GM12878 (cell line): ENCODE measurements at regions of chr22 and their contacts with region 1.

Region 1: GRCh38 chr22:42945736-42946135 is 69.2 kb downstream of the PACSIN2 start:
- DNase-seq: no peak
- ATAC-seq: peak; percentile 61
- H3K4me3 ChIP-seq: no peak overlapping the region
- H3K27ac ChIP-seq: peak overlapping the region; percentile 53; the same call in 1 of the 2 replicates
- H3K4me1 ChIP-seq: peaks cover 31% of the 10 kb centered on the region
- H3K27me3 ChIP-seq: no peaks in the 10 kb centered on the region
- CTCF ChIP-seq: no peak
- EP300 ChIP-seq: no peak
- POLR2A ChIP-seq: no peak
- RAD21 ChIP-seq: no peak

Region 2: DNA sequence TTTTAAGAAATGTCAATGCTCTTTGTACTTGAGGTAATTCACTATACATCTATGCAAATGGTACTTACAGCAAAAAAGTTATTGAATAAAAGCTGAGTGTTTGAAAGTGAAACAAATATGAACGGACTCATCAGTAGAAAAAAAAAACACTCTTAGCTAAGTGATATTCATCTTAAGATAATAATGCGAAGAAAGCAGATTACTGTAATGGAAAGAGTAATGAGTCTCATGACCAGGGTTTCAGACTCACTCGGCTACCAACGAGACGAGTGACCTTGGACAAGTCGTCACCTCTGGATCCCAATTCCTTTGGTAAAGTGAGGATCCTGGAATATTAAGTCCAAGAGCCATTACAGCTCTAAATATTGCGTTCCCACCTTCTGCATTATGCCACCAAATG is 12.2 kb after region 1 on chr22:
- CTCF ChIA-PET with region 1: interaction called, 4 read pairs
- POLR2A ChIA-PET with region 1: interaction called, 4 read pairs
- RAD21 ChIA-PET with region 1: interaction called, 7 read pairs
- SMC1A ChIA-PET with region 1: interaction called, 10 read pairs
- in situ Hi-C with region 1: no loop called
- intact Hi-C with region 1: no loop called
- DNase-seq: no peak
- ATAC-seq: peak; percentile 54
- H3K4me3 ChIP-seq: no peak overlapping the region
- H3K27ac ChIP-seq: peak overlapping the region; percentile 27; the same call in 1 of the 2 replicates
- H3K4me1 ChIP-seq: peaks cover 11% of the 10 kb centered on the region
- H3K27me3 ChIP-seq: no peaks in the 10 kb centered on the region
- CTCF ChIP-seq: no peak
- EP300 ChIP-seq: no peak
- POLR2A ChIP-seq: no peak
- RAD21 ChIP-seq: no peak

Region 3: DNA sequence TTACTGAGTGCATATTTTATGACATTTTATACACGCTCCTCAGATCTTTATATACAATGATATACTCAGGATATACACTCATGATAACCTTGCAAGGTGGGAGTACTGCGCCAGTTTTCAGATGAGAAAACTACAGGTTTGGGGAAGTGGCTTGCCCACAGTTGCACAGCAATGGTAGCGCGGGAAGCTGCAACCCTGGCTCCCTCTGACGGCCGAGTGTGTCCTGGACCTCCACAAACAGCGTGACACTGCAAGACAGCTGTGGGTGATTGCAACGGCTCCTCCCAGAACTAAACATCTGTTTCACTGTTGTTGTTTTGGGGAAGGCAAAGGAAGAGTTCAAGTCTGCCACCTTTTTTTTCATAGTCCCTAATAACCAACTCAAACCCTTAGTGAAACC is 22.2 kb after region 1 on chr22:
- CTCF ChIA-PET with region 1: interaction called, 4 read pairs
- POLR2A ChIA-PET with region 1: interaction called, 4 read pairs
- RAD21 ChIA-PET with region 1: no interaction called
- SMC1A ChIA-PET with region 1: interaction called, 10 read pairs
- in situ Hi-C with region 1: no loop called
- intact Hi-C with region 1: no loop called
- DNase-seq: no peak
- ATAC-seq: peak; percentile 82
- H3K4me3 ChIP-seq: no peak overlapping the region
- H3K27ac ChIP-seq: no peak overlapping the region
- H3K4me1 ChIP-seq: peaks cover 24% of the 10 kb centered on the region
- H3K27me3 ChIP-seq: no peaks in the 10 kb centered on the region
- CTCF ChIP-seq: peak; percentile 48 to 86 (median 61)
- EP300 ChIP-seq: no peak
- POLR2A ChIP-seq: no peak
- RAD21 ChIP-seq: peak; percentile 56

Region 4: DNA sequence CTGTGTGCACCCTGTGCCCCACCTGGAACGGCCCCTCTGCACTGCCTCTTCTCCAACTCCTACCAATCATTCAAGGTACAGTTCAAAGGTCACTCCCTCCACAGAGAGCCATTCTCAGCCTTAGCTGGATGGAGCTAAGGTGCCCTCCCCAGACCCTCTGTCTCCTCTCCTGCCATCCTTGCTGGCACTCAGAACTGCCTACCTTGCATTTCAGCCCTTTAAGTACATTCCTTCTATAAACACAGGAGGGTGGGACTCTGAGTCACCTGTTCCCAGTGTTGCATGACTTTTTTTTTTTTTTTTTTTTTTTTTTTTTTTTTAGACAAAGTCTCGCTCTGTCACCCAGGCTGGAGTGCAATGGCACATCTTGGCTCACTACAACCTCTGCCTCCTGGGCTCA is 134.9 kb after region 1 on chr22:
- CTCF ChIA-PET with region 1: no interaction called
- POLR2A ChIA-PET with region 1: no interaction called
- RAD21 ChIA-PET with region 1: no interaction called
- SMC1A ChIA-PET with region 1: no interaction called
- in situ Hi-C with region 1: no loop called
- intact Hi-C with region 1: no loop called
- DNase-seq: no peak
- ATAC-seq: no peak
- H3K4me3 ChIP-seq: no peak overlapping the region
- H3K27ac ChIP-seq: no peak overlapping the region
- H3K4me1 ChIP-seq: peaks cover 2% of the 10 kb centered on the region
- H3K27me3 ChIP-seq: no peaks in the 10 kb centered on the region
- CTCF ChIP-seq: no peak
- EP300 ChIP-seq: no peak
- POLR2A ChIP-seq: no peak
- RAD21 ChIP-seq: no peak